MCF 10A (cell line): ENCODE measurements at regions of chr5 and their contacts with region 1.

Region 1: GRCh38 chr5:149852641-149853330 is 91.8 kb downstream of the PDE6A start:
- DNase-seq: peak; percentile 91
- H3K4me3 Mint-ChIP-seq: no peak overlapping the region
- H3K27ac Mint-ChIP-seq: peak overlapping the region; percentile 16
- H3K4me1 Mint-ChIP-seq: peaks cover 17% of the 10 kb centered on the region
- H3K27me3 Mint-ChIP-seq: no peaks in the 10 kb centered on the region
- CTCF ChIP-seq: peak; percentile 87

Region 2: GRCh38 chr5:149895416-149896345 is 42.9 kb after region 1 on chr5:
- CTCF ChIA-PET with region 1: interaction called, 13 read pairs
- POLR2A ChIA-PET with region 1: interaction called, 9 read pairs
- intact Hi-C with region 1: no loop called
- DNase-seq: peak; percentile 87
- H3K4me3 Mint-ChIP-seq: peak overlapping the region; percentile 40
- H3K27ac Mint-ChIP-seq: peak overlapping the region; percentile 84
- H3K4me1 Mint-ChIP-seq: peaks cover 42% of the 10 kb centered on the region
- H3K27me3 Mint-ChIP-seq: no peaks in the 10 kb centered on the region
- CTCF ChIP-seq: no peak

Region 3: DNA sequence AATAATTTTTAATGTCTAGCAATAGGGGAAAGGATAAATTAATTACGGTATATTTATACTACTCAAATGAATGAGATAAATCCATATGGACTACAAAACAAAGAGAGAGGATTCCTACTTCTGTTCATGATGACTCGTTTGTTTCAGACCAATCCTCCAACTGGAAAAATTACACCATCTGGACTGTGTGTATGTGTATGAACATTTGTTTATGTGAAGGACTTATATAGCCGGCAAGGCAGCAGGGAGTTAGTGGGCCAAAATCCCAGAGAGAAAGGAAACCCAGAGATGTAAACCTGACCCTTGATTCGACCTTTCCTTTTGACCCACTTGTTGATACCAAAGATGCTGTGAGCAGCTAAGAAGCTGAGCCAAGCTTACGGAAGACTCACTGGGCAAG is 71.7 kb after region 1 on chr5:
- CTCF ChIA-PET with region 1: interaction called, 19 read pairs
- POLR2A ChIA-PET with region 1: interaction called, 3 read pairs
- intact Hi-C with region 1: no loop called
- DNase-seq: no peak
- H3K4me3 Mint-ChIP-seq: no peak overlapping the region
- H3K27ac Mint-ChIP-seq: peak overlapping the region; percentile 11
- H3K4me1 Mint-ChIP-seq: peaks cover 27% of the 10 kb centered on the region
- H3K27me3 Mint-ChIP-seq: no peaks in the 10 kb centered on the region
- CTCF ChIP-seq: no peak

Region 4: DNA sequence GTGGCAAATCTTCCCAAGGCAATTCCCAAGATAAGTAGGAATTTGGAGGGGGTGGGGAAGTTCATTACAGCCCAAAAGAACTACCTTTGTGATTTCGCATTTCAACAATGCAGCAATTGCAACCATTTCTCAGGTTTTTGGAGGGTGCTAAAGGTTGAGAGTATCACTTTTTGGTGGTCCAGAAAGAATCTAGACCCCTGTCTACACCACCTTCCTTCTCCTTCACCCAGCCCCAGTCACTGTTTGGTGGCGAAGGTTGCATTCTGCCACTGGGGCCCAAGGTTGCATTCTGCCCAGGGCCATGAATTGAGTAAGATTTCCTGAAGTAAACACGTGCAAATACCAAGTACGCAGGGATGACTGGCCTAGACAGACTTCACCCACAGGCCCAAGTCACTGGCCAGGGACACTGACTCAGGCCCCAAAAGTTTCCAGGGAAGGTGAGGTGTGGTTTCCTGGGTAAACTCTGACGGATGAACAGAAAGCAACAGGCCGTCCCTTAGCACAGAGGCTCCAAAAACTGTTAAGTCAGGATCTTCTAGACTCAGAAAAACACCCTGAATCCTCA is 86.1 kb after region 1 on chr5:
- CTCF ChIA-PET with region 1: interaction called, 1,621 read pairs
- POLR2A ChIA-PET with region 1: interaction called, 12 read pairs
- intact Hi-C with region 1: no loop called
- DNase-seq: peak; percentile 100
- H3K4me3 Mint-ChIP-seq: peak overlapping the region; percentile 55
- H3K27ac Mint-ChIP-seq: peak overlapping the region; percentile 98
- H3K4me1 Mint-ChIP-seq: peaks cover 77% of the 10 kb centered on the region
- H3K27me3 Mint-ChIP-seq: no peaks in the 10 kb centered on the region
- CTCF ChIP-seq: no peak

Region 5: DNA sequence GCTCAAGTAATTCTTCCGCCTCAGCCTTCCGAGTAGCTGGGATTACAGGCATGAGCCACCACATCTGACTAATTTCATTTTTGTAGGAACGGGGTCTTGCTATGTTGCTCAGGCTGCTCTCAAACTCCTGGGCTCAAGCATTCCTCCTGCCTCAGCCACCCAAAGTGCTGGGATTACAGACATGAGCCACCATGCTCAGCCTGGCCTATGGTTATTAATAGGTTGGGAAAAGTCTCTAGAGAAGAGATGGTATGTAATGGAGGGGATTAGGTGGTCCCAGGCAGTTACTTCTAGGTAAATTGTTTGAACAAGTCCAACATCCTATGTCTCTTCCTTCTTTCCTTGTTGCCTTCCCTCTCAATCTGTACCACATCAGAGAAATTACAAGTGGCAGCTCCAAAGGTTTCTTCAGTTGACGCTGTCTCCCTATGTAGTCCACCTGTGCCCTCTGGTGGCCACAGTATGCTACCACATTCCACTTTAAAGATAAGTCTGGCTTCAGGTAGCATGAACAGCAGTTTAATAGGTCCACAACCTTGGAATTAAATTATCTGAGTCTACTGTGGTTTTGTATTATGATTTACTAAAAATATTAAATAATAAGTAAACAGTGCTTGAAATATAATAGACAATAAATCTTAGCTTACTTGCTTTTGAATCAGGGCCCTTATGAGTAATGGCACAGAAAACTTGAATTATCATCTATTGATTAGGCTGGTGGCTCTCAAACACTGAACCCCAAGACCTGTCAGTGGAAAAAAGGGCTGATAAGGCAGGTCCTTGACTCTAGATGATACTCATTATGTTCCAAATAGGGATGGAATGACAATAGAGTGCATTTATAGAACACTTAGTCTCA is 138.0 kb after region 1 on chr5:
- CTCF ChIA-PET with region 1: interaction called, 24 read pairs
- POLR2A ChIA-PET with region 1: interaction called, 5 read pairs
- intact Hi-C with region 1: no loop called
- DNase-seq: peak; percentile 91
- H3K4me3 Mint-ChIP-seq: no peak overlapping the region
- H3K27ac Mint-ChIP-seq: no peak overlapping the region
- H3K4me1 Mint-ChIP-seq: peaks cover 10% of the 10 kb centered on the region
- H3K27me3 Mint-ChIP-seq: no peaks in the 10 kb centered on the region
- CTCF ChIP-seq: peak; percentile 96